T-cell (primary cell): ENCODE measurements at regions of chr1 and their contacts with region 1.

Region 1: DNA sequence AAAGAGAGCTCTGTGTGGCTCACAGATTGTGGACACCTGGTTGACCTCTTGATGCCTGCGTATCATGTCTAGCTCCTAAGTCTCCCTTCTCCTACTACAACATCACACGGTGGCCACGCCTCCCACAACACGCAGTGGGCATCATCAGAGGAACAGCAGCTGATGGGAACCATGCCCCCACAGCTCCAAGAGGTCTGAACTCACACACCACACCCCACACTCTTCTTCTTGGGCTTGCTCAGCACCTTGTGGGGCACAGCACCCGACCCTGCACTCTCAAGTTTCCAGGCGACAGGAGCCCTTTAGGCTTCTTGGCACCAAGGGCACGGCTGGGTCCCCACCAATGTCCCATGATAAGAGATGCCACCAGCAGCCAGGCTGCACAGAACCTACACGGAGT is 18.8 kb upstream of the CDCP2 start:
- DNase-seq: no peak
- ATAC-seq: no peak
- H3K4me3 ChIP-seq: no peak overlapping the region
- H3K4me3 Mint-ChIP-seq: no peak overlapping the region
- H3K27ac ChIP-seq: no peak overlapping the region
- H3K27ac Mint-ChIP-seq: no peak overlapping the region
- H3K4me1 ChIP-seq: peaks cover 0 to 4% of the 10 kb centered on the region in 2 experiments
- H3K4me1 Mint-ChIP-seq: peaks cover 6 to 11% (median 9%) of the 10 kb centered on the region in 3 donors
- H3K27me3 ChIP-seq: no peaks in the 10 kb centered on the region
- H3K27me3 Mint-ChIP-seq: no peaks in the 10 kb centered on the region

Region 2: GRCh38 chr1:54125386-54126070 is 46.1 kb before region 1 on chr1:
- CTCF ChIA-PET with region 1: no interaction called
- POLR2A ChIA-PET with region 1: interaction called in 1 of 2 experiments, 10 read pairs
- DNase-seq: no peak
- ATAC-seq: no peak
- H3K4me3 ChIP-seq: no peak overlapping the region
- H3K4me3 Mint-ChIP-seq: no peak overlapping the region
- H3K27ac ChIP-seq: no peak overlapping the region
- H3K27ac Mint-ChIP-seq: no peak overlapping the region
- H3K4me1 ChIP-seq: peaks cover 0 to 12% of the 10 kb centered on the region in 2 experiments
- H3K4me1 Mint-ChIP-seq: peaks cover 6 to 11% (median 8%) of the 10 kb centered on the region in 3 donors
- H3K27me3 ChIP-seq: peaks cover 0 to 30% of the 10 kb centered on the region in 2 experiments
- H3K27me3 Mint-ChIP-seq: peaks cover 0 to 4% of the 10 kb centered on the region in 2 donors

Region 3: GRCh38 chr1:54188291-54188690 is 16.7 kb after region 1 on chr1:
- CTCF ChIA-PET with region 1: no interaction called
- POLR2A ChIA-PET with region 1: no interaction called
- DNase-seq: no peak
- ATAC-seq: no peak
- H3K4me3 ChIP-seq: no peak overlapping the region
- H3K4me3 Mint-ChIP-seq: no peak overlapping the region
- H3K27ac ChIP-seq: no peak overlapping the region
- H3K27ac Mint-ChIP-seq: no peak overlapping the region
- H3K4me1 ChIP-seq: no peaks in the 10 kb centered on the region
- H3K4me1 Mint-ChIP-seq: no peaks in the 10 kb centered on the region
- H3K27me3 ChIP-seq: no peaks in the 10 kb centered on the region
- H3K27me3 Mint-ChIP-seq: no peaks in the 10 kb centered on the region